Tibial artery (tissue), 4 donors: ENCODE measurements at regions of chrX and their contacts with region 1.

Region 1: DNA sequence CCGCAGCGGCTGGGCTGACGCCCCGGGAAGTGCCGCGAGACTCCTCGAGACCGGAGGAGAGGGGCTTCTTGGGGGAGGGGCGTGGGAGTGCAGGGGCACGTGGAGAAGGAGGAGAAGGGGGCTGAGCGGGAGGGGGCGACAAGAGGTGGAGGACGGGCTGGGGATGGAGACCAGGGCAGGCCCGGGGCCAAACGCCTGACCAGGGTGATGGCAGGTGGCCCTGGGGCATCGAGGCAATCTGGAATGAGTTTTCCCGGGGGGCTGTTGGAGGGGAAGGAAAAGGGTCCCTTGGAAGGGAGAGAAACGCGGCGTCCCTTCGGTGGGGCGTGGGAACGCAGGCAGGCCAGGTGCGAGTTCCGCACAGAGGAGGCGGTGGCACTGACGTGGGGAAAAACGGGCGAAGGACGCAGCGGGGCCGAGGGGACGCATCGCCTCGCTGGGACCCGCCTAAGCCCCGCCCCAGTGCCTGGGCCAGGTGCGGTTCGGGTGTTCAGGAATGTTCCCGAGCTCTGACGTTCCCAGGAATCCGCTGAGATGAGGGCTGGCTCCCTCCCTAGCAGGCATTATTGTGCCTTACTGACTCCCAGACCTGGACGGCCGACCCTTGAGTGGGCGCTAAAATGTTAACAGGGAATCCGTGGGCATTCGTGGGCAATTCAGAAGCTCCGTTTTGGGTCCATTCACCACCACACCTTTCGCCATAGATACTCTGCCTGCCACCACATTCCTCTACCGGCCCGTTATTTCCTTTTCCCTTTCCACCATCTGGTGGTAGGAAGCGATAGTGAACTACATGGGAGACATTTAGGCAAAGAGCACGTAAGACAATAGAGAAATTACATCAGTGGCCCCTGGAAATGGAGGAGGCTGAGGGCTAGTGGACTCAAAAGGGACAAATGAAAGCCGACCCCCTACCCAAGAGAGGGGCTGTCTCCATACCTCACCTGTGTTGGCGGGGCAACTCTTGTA is 795 bp upstream of the SH3KBP1 start:
- DNase-seq: peak; percentile 24 to 64
- H3K4me3 ChIP-seq: peak overlapping the region; percentile 73 to 86
- H3K27ac ChIP-seq: peak overlapping the region; percentile 47 to 51
- H3K4me1 ChIP-seq: peaks cover 0 to 5% (median 0%) of the 10 kb centered on the region in 4 donors
- H3K27me3 ChIP-seq: no peaks in the 10 kb centered on the region
- CTCF ChIP-seq: peak; percentile 48 to 59

Region 2: DNA sequence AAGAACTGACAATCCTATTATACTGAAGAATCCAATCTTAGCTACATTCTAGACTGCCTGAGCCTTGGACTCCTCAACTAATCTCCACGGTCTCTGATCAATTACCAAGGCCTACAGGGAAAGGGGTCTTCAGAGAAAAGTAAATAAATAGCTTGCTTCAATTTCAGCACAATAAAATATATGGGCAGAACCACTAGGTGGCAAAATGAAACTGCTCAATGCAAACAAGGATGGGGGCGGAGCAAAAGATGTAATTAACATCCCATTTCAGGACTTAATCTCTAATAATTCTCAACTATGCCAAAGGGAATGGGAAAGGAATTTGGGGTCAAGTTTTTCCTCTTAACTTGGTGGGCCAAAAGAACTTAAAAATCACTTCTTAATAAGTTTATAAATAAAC is 294.5 kb before region 1 on chrX:
- intact Hi-C with region 1: loop called (anchors 10 kb)
- DNase-seq: no peak
- H3K4me3 ChIP-seq: no peak overlapping the region
- H3K27ac ChIP-seq: no peak overlapping the region
- H3K4me1 ChIP-seq: peaks cover 0 to 3% (median 0%) of the 10 kb centered on the region in 4 donors
- H3K27me3 ChIP-seq: no peaks in the 10 kb centered on the region
- CTCF ChIP-seq: peak; percentile 31 to 43

Region 3: DNA sequence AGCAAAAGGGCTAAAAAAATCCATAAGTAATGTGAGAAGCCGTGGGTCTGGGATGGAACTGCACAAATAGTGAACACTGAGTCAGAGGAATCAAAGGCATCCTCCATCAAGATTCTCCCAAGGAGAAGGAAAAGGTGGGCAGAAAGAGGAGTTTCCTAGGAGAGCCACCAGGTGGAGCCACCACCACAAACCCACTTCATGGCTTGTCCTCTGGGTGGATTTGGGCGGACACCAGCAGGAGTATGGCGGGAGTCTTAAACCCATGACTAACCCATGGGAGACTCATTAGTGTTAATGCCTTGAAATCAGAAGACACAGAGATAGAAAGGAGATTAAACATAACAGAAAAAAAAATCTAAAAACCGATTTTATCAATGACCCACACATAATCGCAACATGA is 148.5 kb before region 1 on chrX:
- intact Hi-C with region 1: loop called (anchors 5 kb)
- DNase-seq: peak; percentile 30 to 69
- H3K4me3 ChIP-seq: no peak overlapping the region
- H3K27ac ChIP-seq: no peak overlapping the region
- H3K4me1 ChIP-seq: no peaks in the 10 kb centered on the region
- H3K27me3 ChIP-seq: no peaks in the 10 kb centered on the region
- CTCF ChIP-seq: peak; percentile 28 to 44